Left ventricle myocardium inferior (tissue), 1 donor: ENCODE measurements at regions of chr9 and their contacts with region 1.

Region 1: DNA sequence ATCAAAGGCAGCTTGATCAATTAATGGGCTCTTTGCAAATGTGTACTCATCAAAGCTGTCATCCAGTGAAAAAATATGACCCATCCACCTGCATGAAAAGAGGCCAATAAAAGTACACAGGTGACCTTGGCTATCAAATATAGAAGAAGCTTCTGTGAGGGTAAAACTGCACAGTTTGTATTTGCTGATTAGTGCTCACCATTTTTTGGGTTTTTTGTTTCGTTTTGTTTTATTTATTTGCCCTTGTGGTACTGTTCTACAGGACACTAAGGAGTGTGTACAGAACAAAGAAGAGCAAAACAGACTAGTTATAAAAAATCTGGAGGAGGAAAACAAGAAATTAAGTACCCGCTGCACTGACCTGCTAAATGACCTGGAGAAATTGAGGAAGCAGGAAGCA is 101.3 kb downstream of the CNTLN start:
- DNase-seq: no peak
- H3K4me3 ChIP-seq: no peak overlapping the region
- H3K27ac ChIP-seq: no peak overlapping the region
- H3K4me1 ChIP-seq: no peaks in the 10 kb centered on the region
- H3K27me3 ChIP-seq: no peaks in the 10 kb centered on the region
- CTCF ChIP-seq: no peak

Region 2: DNA sequence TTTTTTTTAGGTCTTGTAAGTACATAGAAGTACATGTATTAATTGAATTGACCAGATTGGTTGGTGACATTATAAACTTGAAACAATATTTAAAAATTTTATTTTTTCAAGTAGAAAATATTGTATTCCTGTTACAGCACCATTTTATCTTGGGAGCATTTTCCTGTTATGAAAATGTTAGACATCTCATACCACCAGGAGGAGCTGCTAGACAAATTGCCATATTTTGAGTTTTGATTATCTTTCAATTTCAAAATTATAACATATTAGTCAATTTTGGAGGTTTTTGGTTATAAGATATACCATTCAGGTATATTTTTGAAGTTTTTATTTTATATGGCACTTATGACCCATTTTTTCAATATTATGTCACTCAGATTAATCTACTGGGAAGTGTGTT is 16.9 kb before region 1 on chr9:
- intact Hi-C with region 1: loop called (anchors 2 kb)
- DNase-seq: no peak
- H3K4me3 ChIP-seq: no peak overlapping the region
- H3K27ac ChIP-seq: no peak overlapping the region
- H3K4me1 ChIP-seq: no peaks in the 10 kb centered on the region
- H3K27me3 ChIP-seq: no peaks in the 10 kb centered on the region
- CTCF ChIP-seq: no peak